ENCODE measurements at regions of chr12 and their contacts with region 1.

Region 1: GRCh38 chr12:116015525-116015924 is 262.0 kb downstream of the MED13L start:
- DNase-seq: peak; percentile 68
- ATAC-seq: peak; percentile 89
- H3K4me3 ChIP-seq: no peak overlapping the region
- H3K27ac ChIP-seq: no peak overlapping the region
- H3K4me1 ChIP-seq: 0 out of 2 replicates have a peak, but pooled peaks cover 1% of the 10 kb centered on the region
- H3K27me3 ChIP-seq: no peaks in the 10 kb centered on the region
- CTCF ChIP-seq: peak; percentile 70
- POLR2A ChIP-seq: no peak
- RAD21 ChIP-seq: peak; percentile 79

Region 2: GRCh38 chr12:116055895-116056607 is 40.5 kb after region 1 on chr12:
- CTCF ChIA-PET with region 1: no interaction called
- POLR2A ChIA-PET with region 1: no interaction called
- dilution Hi-C with region 1: no loop called
- in situ Hi-C with region 1: no loop called
- intact Hi-C with region 1: loop called (anchors 5 kb)
- DNase-seq: no peak
- ATAC-seq: no peak
- H3K4me3 ChIP-seq: no peak overlapping the region
- H3K27ac ChIP-seq: no peak overlapping the region
- H3K4me1 ChIP-seq: 0 out of 2 replicates have a peak, but pooled peaks cover 2% of the 10 kb centered on the region
- H3K27me3 ChIP-seq: no peaks in the 10 kb centered on the region
- CTCF ChIP-seq: no peak
- POLR2A ChIP-seq: no peak
- RAD21 ChIP-seq: no peak

Region 3: DNA sequence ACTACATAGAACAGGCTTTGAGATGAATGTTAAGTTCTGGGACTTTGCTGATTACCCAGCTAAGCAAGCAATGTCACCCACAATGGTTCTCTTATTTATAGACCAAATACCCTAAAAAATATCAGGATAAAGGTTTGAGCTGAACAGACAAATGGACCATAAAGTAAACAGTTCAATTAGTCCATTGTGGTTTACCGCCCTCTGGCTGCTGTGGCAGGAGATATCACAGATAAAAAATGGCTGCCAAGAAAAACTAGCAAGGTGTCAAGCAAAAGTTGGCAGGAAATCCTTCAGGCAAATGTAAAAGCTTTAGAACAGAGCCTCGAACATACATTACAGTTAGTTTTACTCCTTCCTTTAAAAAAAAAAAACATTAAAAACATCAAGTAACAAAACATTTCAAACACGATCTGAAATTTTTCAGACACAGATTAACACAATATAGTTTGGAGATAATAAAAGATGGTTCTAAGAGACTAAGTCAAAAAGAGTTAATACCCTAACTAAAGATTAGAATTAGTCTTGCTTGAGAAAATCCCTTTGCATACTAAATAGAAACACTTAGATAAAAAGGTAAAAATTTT is 220.7 kb after region 1 on chr12:
- CTCF ChIA-PET with region 1: interaction called, 3 read pairs
- POLR2A ChIA-PET with region 1: no interaction called
- dilution Hi-C with region 1: no loop called
- in situ Hi-C with region 1: no loop called
- intact Hi-C with region 1: loop called (anchors 5 kb)
- DNase-seq: peak; percentile 54
- ATAC-seq: peak; percentile 40; the same call in 1 of the 2 replicates
- H3K4me3 ChIP-seq: no peak overlapping the region
- H3K27ac ChIP-seq: no peak overlapping the region
- H3K4me1 ChIP-seq: peaks cover 2% of the 10 kb centered on the region
- H3K27me3 ChIP-seq: no peaks in the 10 kb centered on the region
- CTCF ChIP-seq: peak; percentile 64
- POLR2A ChIP-seq: no peak
- RAD21 ChIP-seq: peak; percentile 68

Region 4: DNA sequence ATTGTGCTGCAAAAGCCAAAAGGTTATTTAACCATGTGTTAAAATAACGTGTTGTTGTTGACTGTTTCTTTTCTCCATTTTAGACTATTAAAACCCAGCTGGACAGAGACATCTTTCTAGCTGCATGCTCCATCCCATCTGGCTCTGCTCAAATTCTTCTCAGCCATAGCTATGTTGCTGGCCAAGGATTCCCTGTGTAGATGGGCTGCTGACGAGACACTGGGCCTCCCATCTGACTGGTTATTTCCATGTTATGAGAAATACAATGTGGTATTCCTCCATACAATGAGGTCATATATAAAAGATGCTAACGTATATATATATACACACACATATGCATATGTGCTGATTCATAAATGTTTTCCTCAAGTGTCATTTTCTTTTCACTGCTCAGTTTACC is 231.9 kb after region 1 on chr12:
- CTCF ChIA-PET with region 1: no interaction called
- POLR2A ChIA-PET with region 1: no interaction called
- dilution Hi-C with region 1: no loop called
- in situ Hi-C with region 1: no loop called
- intact Hi-C with region 1: no loop called
- DNase-seq: peak; percentile 80
- ATAC-seq: peak; percentile 59
- H3K4me3 ChIP-seq: no peak overlapping the region
- H3K27ac ChIP-seq: no peak overlapping the region
- H3K4me1 ChIP-seq: peaks cover 11% of the 10 kb centered on the region
- H3K27me3 ChIP-seq: no peaks in the 10 kb centered on the region
- CTCF ChIP-seq: no peak
- POLR2A ChIP-seq: no peak
- RAD21 ChIP-seq: no peak

Region 5: DNA sequence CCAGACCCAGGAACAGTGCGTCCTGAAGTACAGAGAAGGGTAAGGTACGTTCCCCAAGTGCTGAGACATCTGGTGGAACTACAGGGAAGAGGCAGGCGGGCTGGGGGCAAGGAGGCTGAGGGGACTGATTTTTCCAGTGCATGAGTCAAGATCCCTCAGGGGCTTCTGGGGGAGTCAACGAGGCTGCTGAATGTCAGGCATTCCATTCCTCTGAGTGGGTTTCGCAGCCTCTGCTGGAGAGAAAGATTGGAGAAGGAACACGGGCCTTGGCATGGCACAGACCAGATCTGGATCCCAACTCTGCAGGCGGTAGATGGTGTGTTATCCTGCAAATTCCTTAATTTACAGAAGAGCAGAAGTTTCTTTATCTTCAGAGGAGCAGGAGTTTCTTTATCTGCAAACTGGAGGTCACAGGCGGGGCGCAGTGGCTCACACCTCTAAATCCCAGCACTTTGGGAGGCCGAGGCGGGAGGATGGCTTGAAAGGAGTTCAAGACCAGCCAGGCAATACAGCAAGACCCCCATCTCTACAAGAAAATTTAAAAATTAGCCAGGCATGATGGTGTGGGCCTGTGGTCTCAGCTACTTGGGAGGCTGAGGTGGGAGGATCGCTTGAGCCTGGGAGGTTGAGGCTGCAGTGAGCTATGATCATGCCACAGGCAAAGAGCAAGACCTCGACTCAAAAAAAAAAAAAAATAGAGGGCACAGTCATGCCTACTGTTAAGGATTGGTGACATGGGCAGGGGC is 411.0 kb after region 1 on chr12:
- CTCF ChIA-PET with region 1: no interaction called
- POLR2A ChIA-PET with region 1: no interaction called
- dilution Hi-C with region 1: no loop called
- in situ Hi-C with region 1: no loop called
- intact Hi-C with region 1: loop called (anchors 2 kb)
- DNase-seq: peak; percentile 98
- ATAC-seq: peak; percentile 95
- H3K4me3 ChIP-seq: no peak overlapping the region
- H3K27ac ChIP-seq: peak overlapping the region; percentile 64
- H3K4me1 ChIP-seq: peaks cover 12% of the 10 kb centered on the region
- H3K27me3 ChIP-seq: no peaks in the 10 kb centered on the region
- CTCF ChIP-seq: peak; percentile 63
- POLR2A ChIP-seq: 0 out of 2 replicates have a peak, but pooled peaks have one; percentile 33
- RAD21 ChIP-seq: peak; percentile 76

Region 6: DNA sequence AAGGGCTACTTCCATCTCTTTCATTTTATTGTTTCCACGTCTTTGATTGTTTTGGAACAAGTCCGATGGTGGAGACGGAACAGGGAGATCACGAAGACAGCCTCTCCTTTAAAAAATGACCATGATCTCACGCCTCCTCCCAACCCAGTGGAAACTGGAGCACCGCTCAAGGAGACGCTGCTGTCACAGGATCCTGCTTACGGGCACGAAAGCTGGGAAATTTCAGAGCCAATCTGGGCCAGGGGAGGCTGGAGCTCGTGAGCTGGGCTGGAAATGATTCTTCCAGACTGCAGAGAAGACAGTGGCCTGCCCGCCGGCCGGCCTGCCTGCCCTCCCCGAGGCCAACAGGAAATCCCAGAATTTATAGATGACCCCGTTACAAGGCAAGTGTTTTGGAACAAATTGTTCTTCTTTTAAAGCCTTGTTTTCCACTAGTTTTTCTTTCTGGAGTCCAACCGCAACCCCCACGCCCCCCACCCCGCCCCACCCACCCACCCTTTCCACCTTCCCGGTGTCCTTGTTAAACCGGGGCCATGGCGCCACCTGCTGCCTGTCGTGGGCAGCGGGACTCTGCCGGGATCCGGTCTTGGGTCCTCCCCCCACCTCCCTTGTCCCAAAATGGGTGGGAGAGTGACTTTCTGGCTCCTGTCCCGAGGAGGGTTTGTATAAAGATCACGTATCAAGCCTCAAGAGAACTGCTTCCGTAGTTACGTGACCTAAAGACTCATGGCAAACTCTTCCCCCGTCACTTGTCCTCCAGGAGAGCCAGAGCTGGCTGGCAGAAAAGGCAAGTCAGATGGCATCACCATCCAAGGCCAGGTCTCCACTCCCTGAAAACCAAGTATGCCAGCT is 584.0 kb after region 1 on chr12:
- CTCF ChIA-PET with region 1: interaction called, 4 read pairs
- POLR2A ChIA-PET with region 1: no interaction called
- dilution Hi-C with region 1: no loop called
- in situ Hi-C with region 1: no loop called
- intact Hi-C with region 1: loop called (anchors 5 kb)
- DNase-seq: peak; percentile 58
- ATAC-seq: peak; percentile 93
- H3K4me3 ChIP-seq: no peak overlapping the region
- H3K27ac ChIP-seq: peak overlapping the region; percentile 61
- H3K4me1 ChIP-seq: peaks cover 11% of the 10 kb centered on the region
- H3K27me3 ChIP-seq: no peaks in the 10 kb centered on the region; the same call in 1 of the 2 replicates
- CTCF ChIP-seq: peak; percentile 61
- POLR2A ChIP-seq: no peak
- RAD21 ChIP-seq: peak; percentile 64